Activated CD8-positive, alpha-beta memory T cell treated with anti-CD3 and anti-CD28 coated beads, Interleukin-2, amount 10 ng/mL, durations not matched to agents 7 days and 5 days (primary cell): ENCODE measurements at regions of chr3 and their contacts with region 1.

Region 1: DNA sequence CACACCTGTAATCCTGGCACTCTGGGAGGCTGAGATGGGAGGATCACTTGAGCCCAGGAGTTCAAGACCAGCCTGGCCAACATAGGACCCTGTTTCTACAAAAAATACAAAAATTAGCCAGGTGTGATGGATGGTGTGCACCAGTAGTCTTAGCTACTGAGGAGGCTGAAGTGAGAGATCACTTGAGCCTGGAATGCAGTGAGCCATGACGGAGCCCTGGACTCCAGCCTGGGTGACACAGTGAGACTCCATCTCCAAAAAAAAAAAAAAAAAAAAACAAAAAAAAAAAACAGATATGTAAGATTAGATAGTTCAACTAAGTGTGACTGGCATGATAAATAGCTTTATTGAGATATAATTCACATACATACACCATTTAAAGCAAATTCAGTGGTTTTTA is 9.7 kb downstream of the RBSN start:
- DNase-seq: no peak
- ATAC-seq: no peak
- H3K4me3 Mint-ChIP-seq: no peak overlapping the region
- H3K27ac Mint-ChIP-seq: no peak overlapping the region
- H3K4me1 Mint-ChIP-seq: no peaks in the 10 kb centered on the region
- H3K27me3 Mint-ChIP-seq: no peaks in the 10 kb centered on the region

Region 2: GRCh38 chr3:15108082-15108545 is 18.9 kb after region 1 on chr3:
- CTCF ChIA-PET with region 1: interaction called, 12 read pairs
- DNase-seq: peak; percentile 81
- ATAC-seq: peak; percentile 95
- H3K4me3 Mint-ChIP-seq: no peak overlapping the region
- H3K27ac Mint-ChIP-seq: no peak overlapping the region
- H3K4me1 Mint-ChIP-seq: peaks cover 3% of the 10 kb centered on the region
- H3K27me3 Mint-ChIP-seq: peaks cover 16% of the 10 kb centered on the region

Region 3: GRCh38 chr3:15512166-15512565 is 423.0 kb after region 1 on chr3:
- CTCF ChIA-PET with region 1: no interaction called
- DNase-seq: no peak
- ATAC-seq: no peak
- H3K4me3 Mint-ChIP-seq: no peak overlapping the region
- H3K27ac Mint-ChIP-seq: no peak overlapping the region
- H3K4me1 Mint-ChIP-seq: no peaks in the 10 kb centered on the region
- H3K27me3 Mint-ChIP-seq: no peaks in the 10 kb centered on the region